ENCODE measurements at regions of chr7 and their contacts with region 1.

Region 1: GRCh38 chr7:101602484-101603241 is 26.4 kb downstream of the MYL10 start:
- DNase-seq: peak; percentile 45 to 54 (median 48)
- H3K4me3 ChIP-seq: no peak overlapping the region
- H3K4me3 Mint-ChIP-seq: no peak overlapping the region
- H3K27ac ChIP-seq: no peak overlapping the region
- H3K27ac Mint-ChIP-seq: no peak overlapping the region
- H3K4me1 ChIP-seq: no peaks in the 10 kb centered on the region
- H3K4me1 Mint-ChIP-seq: peaks cover 0 to 3% (median 0%) of the 10 kb centered on the region in 4 donors
- H3K27me3 ChIP-seq: no peaks in the 10 kb centered on the region
- H3K27me3 Mint-ChIP-seq: no peaks in the 10 kb centered on the region

Region 2: GRCh38 chr7:102236592-102237287 is 634.1 kb after region 1 on chr7:
- CTCF ChIA-PET with region 1: interaction called, 4 read pairs
- POLR2A ChIA-PET with region 1: no interaction called
- intact Hi-C with region 1: loop called (anchors 1 kb)
- DNase-seq: peak in 4 of 5 donors; percentile 17 to 39 (median 29)
- H3K4me3 ChIP-seq: no peak overlapping the region
- H3K4me3 Mint-ChIP-seq: no peak overlapping the region
- H3K27ac ChIP-seq: no peak overlapping the region
- H3K27ac Mint-ChIP-seq: peak overlapping the region in 1 of 7 donors; percentile 60
- H3K4me1 ChIP-seq: no peaks in the 10 kb centered on the region
- H3K4me1 Mint-ChIP-seq: no peaks in the 10 kb centered on the region
- H3K27me3 ChIP-seq: no peaks in the 10 kb centered on the region
- H3K27me3 Mint-ChIP-seq: no peaks in the 10 kb centered on the region

Region 3: DNA sequence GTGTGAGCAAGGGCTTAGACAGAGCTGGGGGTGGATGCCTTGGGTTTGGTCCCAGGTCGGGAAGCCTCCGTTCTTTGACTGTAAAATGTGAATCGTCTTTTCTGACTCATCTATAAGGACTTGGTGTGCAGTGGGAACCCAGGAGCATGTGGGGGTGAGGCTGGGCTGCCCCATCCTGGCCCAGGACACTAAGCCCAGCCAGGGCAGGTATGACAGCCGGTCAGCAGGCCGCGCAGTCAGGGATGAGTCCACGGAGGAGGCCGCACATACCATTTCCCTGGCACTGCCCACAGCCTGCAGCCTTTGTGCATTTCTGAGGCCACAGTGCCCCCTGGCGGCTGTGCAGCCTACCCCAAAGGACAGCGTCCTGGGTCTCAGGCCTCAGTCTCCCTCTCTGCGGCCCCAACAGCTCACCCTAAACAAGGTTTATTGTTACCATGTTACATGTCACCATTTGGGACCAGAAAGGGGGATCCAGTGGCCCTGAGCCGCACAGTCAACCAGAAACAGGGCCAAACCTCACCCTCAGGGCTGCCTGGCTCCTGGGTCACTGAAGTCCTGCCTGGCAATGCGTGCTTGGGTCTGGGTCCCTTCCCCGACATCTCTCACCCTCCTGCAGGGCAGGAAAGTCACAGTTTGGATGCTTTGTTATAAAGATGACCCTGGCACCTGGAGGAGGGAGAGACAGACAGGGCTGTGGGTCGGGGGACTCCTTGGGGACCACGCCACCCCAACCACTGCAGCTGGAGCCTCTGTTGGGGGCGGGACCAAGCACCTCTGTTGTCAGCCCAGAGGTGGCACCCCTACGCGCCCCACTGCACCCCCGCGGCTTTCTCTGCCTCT is 669.6 kb after region 1 on chr7:
- CTCF ChIA-PET with region 1: interaction called, 10 read pairs
- POLR2A ChIA-PET with region 1: no interaction called
- intact Hi-C with region 1: no loop called
- DNase-seq: peak; percentile 61 to 66 (median 64)
- H3K4me3 ChIP-seq: no peak overlapping the region
- H3K4me3 Mint-ChIP-seq: no peak overlapping the region
- H3K27ac ChIP-seq: no peak overlapping the region
- H3K27ac Mint-ChIP-seq: no peak overlapping the region
- H3K4me1 ChIP-seq: no peaks in the 10 kb centered on the region
- H3K4me1 Mint-ChIP-seq: peaks cover 3 to 4% (median 3%) of the 10 kb centered on the region in 4 donors
- H3K27me3 ChIP-seq: no peaks in the 10 kb centered on the region
- H3K27me3 Mint-ChIP-seq: no peaks in the 10 kb centered on the region

Region 4: DNA sequence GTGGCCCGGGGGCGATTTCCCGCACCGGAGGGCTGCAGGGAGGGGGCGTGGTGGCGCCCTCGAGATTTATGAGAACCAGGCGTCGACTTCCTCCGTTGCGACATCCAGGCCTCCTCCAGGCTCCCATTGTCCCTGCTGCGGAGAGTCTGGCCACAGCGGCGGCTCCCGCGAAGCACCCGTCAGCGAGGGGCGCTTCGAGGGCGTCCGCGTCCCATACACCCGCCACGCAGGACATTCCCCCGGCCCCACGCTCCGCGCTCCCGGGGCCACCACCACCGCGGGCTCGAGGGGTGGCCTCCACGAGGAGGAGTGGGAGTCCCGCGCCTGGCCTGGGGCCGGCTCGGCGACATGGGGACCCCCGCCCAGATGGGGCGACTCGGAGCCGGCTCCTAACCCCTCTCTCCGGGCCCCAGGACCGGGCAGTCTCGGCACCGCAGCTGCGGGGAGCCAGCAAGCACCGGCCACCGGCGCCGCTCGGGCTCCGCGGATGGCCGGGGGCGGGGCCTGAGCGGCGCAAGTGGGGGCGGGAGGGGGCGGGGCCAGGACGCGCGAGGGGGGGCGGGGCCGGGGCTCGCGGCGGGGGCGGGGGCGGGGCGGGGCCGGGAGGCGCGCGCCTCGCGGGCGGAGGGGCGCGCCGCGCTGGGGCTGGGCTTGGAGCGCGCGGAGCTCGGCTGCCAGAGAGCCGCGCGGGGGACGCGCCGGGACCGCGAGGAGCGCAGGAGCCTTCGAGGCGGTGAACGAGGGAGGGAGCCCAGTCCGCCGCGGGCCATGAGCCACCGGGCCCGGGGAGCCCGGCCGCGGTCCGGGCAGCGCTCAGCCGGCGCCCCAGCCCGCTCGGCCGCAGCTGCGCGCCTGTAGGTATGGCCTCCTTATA is 683.8 kb after region 1 on chr7 and contains the start of gene SH2B2:
- CTCF ChIA-PET with region 1: no interaction called
- POLR2A ChIA-PET with region 1: no interaction called
- intact Hi-C with region 1: no loop called
- DNase-seq: peak; percentile 43 to 58 (median 50)
- H3K4me3 ChIP-seq: peak within 1 kb of the TSS; percentile 29 to 68
- H3K4me3 Mint-ChIP-seq: peak within 1 kb of the TSS; percentile 70 to 86 (median 78)
- H3K27ac ChIP-seq: peak within 1 kb of the TSS; percentile 38
- H3K27ac Mint-ChIP-seq: peak within 1 kb of the TSS in 3 of 7 donors; percentile 42 to 85 (median 55)
- H3K4me1 ChIP-seq: peaks cover 35% of the 10 kb centered on the region
- H3K4me1 Mint-ChIP-seq: peaks cover 19 to 45% (median 29%) of the 10 kb centered on the region in 4 donors
- H3K27me3 ChIP-seq: no peaks in the 10 kb centered on the region
- H3K27me3 Mint-ChIP-seq: peaks cover 0 to 2% of the 10 kb centered on the region in 2 donors
- total RNA-seq, gene SH2B2: 0.79 to 1.2 TPM